HepG2 (cell line): ENCODE measurements at regions of chr15 and their contacts with region 1.

Region 1: DNA sequence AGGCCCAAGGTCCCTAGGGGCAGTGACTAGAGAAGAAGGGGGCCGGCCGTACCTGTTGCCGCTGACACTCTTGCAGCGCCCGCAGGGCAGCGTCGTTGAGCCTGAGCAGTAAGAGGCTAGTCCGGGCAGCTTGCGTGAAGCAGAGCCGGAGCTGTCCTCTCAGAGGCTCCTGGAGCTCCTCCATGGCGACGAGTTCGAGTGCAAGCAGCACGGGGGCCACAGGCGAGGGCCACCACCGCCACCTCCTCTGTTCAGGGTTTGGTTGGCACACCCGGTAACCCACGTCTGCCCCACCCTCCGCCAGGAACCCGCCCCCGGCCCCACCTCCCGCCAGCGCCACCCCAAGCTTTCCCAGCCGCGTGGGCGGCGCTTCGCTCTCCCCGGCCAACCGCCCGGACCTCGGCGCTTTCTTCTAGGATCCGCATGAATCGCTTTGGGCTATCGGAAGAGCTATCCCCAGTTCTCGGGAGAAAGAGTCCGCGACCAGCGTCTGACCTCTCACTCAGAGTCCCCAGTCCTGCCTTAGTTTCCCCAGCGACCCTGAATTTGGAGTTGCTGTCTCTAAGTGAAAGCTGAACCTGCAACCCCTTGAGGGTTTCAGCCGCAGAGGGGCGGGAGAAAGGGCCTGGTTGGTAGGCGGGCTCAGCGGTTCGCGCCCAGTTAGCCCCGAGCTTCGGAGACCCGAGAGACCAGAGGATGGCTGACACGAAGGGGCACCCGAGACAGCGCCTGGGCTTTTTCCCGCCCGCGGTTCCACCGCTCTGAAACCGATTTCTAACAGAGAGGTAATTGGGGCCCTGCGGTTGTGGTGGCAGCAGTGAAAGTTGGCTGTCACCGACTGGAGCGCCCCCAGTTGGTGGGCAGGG is at the start of gene ELL3:
- DNase-seq: peak; percentile 58
- ATAC-seq: peak; percentile 72
- H3K4me3 ChIP-seq: peak within 1 kb of the TSS; percentile 65 to 97 (median 78)
- H3K27ac ChIP-seq: peak within 1 kb of the TSS; percentile 86
- H3K4me1 ChIP-seq: peaks cover 15% of the 10 kb centered on the region
- H3K27me3 ChIP-seq: no peaks in the 10 kb centered on the region
- CTCF ChIP-seq: peak; percentile 94
- EP300 ChIP-seq: no peak
- POLR2A ChIP-seq: peak in 1 of 2 experiments; percentile 83; a peak in 3 of 4 replicates
- RAD21 ChIP-seq: peak; percentile 33; the same call in 1 of the 2 replicates
- total RNA-seq, gene ELL3: 5.8 and 6.1 TPM in 2 replicates

Region 2: DNA sequence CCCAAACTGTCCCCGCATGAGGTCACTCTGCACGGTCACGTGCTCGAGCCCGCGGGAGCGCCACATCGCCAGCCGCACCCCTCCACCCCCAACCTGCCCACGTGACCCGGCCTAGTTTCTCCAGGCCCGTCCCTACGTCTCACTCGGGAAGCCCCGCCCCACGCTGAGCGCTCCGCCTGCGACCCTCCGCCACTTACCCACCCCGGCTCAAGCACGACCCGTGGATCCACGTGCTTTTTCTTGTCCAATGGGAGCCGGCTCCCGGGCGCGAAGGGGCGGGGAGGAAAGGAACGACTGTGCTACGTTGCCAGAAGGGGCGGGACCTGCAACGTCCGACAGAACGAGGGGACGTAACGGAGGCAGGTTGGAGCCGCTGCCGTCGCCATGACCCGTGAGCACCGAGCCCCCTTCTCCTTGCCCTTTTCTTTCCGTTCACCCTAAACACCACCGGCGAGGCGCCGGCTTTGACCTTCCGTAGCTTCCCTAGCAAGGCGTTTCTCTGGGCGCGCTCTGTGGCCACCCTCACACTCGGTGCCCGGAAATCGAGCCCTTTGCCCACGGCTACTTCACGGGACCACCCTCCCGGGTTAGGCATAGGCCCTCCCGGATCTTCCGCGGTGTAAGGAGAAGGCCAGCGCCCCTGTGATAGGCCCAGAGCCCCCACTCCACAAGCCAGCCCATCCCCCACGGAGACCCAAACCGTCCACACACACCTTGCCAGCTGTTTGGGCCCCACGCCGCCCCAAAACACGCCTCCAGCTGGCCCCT is 15.2 kb after region 1 on chr15 and contains the start of gene SERF2:
- CTCF ChIA-PET with region 1: no interaction called
- POLR2A ChIA-PET with region 1: interaction called, 34 read pairs
- in situ Hi-C with region 1: no loop called
- intact Hi-C with region 1: no loop called
- DNase-seq: peak; percentile 97
- ATAC-seq: peak; percentile 93
- H3K4me3 ChIP-seq: peak within 1 kb of the TSS; percentile 98 to 100 (median 99)
- H3K27ac ChIP-seq: peak within 1 kb of the TSS; percentile 98
- H3K4me1 ChIP-seq: peaks cover 37% of the 10 kb centered on the region
- H3K27me3 ChIP-seq: no peaks in the 10 kb centered on the region; a peak in 1 of 5 replicates
- CTCF ChIP-seq: no peak
- EP300 ChIP-seq: no peak
- POLR2A ChIP-seq: peak; percentile 99 to 100
- RAD21 ChIP-seq: no peak; the same call in 1 of the 2 replicates
- total RNA-seq, gene SERF2: 1,257 and 1,308 TPM in 2 replicates

Region 3: DNA sequence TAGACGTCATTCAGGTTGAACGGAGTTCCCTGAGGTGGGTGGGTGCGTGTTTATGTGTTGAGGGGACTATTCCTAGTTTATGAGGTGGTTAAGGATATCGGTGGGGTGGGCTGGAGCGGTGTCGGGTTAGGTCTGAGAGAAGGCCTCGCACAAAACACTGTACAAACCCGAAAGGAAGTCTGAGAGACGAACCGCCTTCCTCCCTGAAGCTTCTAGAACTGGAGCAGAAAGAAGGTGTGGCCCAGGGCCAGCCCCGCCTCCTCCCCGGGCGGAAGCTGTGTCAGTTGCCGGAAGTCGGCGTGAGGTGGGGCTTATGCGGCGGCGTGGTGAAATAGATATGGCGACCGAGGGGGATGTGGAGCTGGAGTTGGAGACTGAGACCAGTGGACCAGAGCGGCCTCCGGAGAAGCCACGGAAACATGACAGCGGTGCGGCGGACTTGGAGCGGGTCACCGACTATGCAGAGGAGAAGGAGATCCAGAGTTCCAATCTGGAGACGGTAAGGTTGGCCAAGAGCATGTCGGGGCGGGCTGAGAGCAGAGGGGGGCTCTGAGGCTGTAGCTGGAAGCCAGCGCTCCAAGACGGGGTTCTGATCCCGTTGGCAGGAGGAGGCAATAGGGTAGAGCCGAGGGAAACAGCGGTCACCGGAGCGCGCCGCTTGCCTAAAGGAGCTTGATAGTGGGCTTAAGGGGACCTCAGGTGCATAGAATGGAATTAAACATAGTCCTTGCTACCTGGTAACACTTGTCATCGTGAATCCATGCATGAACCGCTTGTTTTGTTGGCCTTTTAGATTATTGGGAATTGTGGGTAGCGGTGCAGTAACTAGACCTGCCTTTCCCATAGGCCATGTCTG is 23.6 kb after region 1 on chr15 and contains the start of gene HYPK:
- CTCF ChIA-PET with region 1: no interaction called
- POLR2A ChIA-PET with region 1: interaction called, 34 read pairs
- in situ Hi-C with region 1: no loop called
- intact Hi-C with region 1: no loop called
- DNase-seq: peak; percentile 73
- ATAC-seq: peak; percentile 82
- H3K4me3 ChIP-seq: peak within 1 kb of the TSS; percentile 80 to 94 (median 82)
- H3K27ac ChIP-seq: peak within 1 kb of the TSS; percentile 71
- H3K4me1 ChIP-seq: peaks cover 49% of the 10 kb centered on the region
- H3K27me3 ChIP-seq: no peaks in the 10 kb centered on the region; a peak in 1 of 5 replicates
- CTCF ChIP-seq: no peak
- EP300 ChIP-seq: peak in 1 of 2 experiments; percentile 35; a peak in 1 of 4 replicates
- POLR2A ChIP-seq: peak; percentile 73 to 86
- RAD21 ChIP-seq: peak; percentile 4; the same call in 1 of the 2 replicates
- total RNA-seq, gene HYPK: 9.4 and 13.5 TPM in 2 replicates

Region 4: DNA sequence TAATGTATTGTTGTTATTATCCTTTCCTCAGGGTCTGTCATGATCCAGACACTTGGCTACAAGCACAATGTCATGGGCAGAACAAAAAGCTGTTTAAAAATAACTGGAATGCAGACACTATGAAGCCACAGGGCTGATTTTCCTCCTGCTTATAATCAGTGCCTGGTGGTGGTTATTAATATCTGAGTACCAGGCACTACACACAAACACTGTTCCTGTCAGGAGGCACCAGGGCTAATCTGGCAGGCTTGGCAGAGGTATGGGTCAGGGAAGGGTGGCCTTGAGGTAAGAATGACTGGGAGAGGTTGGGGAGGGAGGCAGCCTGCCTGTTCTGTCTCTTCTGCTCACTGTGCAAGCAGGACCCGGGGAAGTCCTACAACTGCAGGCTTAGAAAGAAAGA is 117.0 kb after region 1 on chr15:
- CTCF ChIA-PET with region 1: no interaction called
- POLR2A ChIA-PET with region 1: no interaction called
- in situ Hi-C with region 1: no loop called
- intact Hi-C with region 1: no loop called
- DNase-seq: no peak
- ATAC-seq: no peak
- H3K4me3 ChIP-seq: no peak overlapping the region
- H3K27ac ChIP-seq: no peak overlapping the region
- H3K4me1 ChIP-seq: peaks cover 13% of the 10 kb centered on the region
- H3K27me3 ChIP-seq: no peaks in the 10 kb centered on the region
- CTCF ChIP-seq: no peak
- EP300 ChIP-seq: no peak
- POLR2A ChIP-seq: no peak
- RAD21 ChIP-seq: no peak